ENCODE measurements at regions of chr6 and their contacts with region 1.

Region 1: DNA sequence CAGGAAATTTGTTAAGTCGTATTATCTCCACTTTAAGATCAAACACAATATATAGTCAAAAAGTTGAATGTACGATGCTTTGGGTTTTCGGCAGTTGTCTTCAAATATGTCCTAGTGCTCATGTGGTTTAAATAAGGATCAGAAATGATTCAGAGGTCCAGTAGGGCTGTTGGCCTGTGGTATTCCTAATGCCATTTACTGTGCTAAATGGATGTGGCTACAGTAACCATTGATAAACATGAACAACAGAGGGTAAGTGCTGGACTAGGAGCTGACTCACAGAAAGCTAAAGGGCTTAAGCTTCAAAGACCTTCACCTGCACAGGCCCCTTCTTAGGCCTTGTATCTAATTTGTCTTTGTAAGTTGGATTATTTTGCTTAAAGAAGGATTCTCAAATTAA is 80.5 kb upstream of the TPD52L1 start:
- DNase-seq: no peak
- H3K4me3 ChIP-seq: no peak overlapping the region
- H3K27ac ChIP-seq: no peak overlapping the region
- H3K4me1 ChIP-seq: no peaks in the 10 kb centered on the region
- H3K27me3 ChIP-seq: no peaks in the 10 kb centered on the region
- CTCF ChIP-seq: no peak
- POLR2A ChIP-seq: no peak

Region 2: GRCh38 chr6:124993327-124993726 is 79.7 kb before region 1 on chr6:
- intact Hi-C with region 1: loop called in 1 of 2 experiments (anchors 5 kb)
- DNase-seq: no peak
- H3K4me3 ChIP-seq: no peak overlapping the region
- H3K27ac ChIP-seq: no peak overlapping the region
- H3K4me1 ChIP-seq: peaks cover 0 to 13% of the 10 kb centered on the region in 2 donors
- H3K27me3 ChIP-seq: no peaks in the 10 kb centered on the region
- CTCF ChIP-seq: no peak
- POLR2A ChIP-seq: no peak

Region 3: GRCh38 chr6:125169058-125169457 is 96.0 kb after region 1 on chr6:
- intact Hi-C with region 1: no loop called
- DNase-seq: peak; percentile 68 to 82 (median 80)
- H3K4me3 ChIP-seq: no peak overlapping the region
- H3K27ac ChIP-seq: peak overlapping the region in 4 of 5 donors; percentile 45 to 65 (median 56)
- H3K4me1 ChIP-seq: peaks cover 31 to 36% of the 10 kb centered on the region in 2 donors
- H3K27me3 ChIP-seq: no peaks in the 10 kb centered on the region
- CTCF ChIP-seq: no peak
- POLR2A ChIP-seq: peak in 1 of 2 donors; percentile 5